Heart left ventricle (tissue), 16 donors: ENCODE measurements at regions of chr2 and their contacts with region 1.

Region 1: GRCh38 chr2:101341901-101342624 is 33.6 kb upstream of the RNF149 start:
- DNase-seq: peak; percentile 68 to 84 (median 79)
- ATAC-seq: peak; percentile 66 to 79 (median 72)
- H3K4me3 ChIP-seq: no peak overlapping the region
- H3K27ac ChIP-seq: no peak overlapping the region
- H3K4me1 ChIP-seq: peaks cover 0 to 25% (median 0%) of the 10 kb centered on the region in 12 donors
- H3K27me3 ChIP-seq: no peaks in the 10 kb centered on the region
- CTCF ChIP-seq: peak; percentile 74 to 88 (median 82)
- POLR2A ChIP-seq: no peak

Region 2: DNA sequence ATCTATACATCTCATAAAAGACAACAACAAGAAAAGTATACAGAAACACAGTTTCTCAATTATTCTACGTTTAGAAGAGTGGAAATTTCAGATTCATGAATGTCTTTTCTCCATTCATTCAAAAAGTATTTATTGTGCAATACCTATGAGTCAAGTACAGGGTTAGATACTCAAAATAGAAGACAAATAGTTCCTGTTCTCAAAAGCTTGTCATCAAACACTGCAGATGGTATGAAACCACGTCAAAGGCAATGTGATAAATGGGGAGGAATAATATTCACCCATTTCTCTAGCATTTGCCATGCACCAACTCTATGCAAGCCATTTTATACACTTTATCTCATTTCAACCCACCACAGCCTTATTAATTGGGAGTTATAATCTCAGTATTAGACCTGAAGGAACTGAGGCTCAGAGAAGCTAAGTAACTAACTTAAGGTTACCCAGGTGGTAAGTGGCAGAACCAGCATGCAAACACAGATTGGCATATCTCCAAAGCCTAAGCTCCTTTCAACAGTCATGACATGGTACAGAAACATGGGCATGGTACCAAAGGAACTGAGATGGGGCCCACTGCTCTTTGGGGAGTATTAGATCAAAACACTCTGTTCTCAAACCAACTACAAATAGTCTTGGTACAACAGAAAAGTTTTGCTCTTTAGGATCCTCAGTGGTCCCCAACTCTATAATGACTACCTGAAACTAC is 589.3 kb before region 1 on chr2:
- intact Hi-C with region 1: no loop called
- DNase-seq: no peak
- ATAC-seq: peak; percentile 60 to 85 (median 82)
- H3K4me3 ChIP-seq: no peak overlapping the region
- H3K27ac ChIP-seq: peak overlapping the region in 4 of 12 donors; percentile 8 to 53 (median 26)
- H3K4me1 ChIP-seq: peaks cover 0 to 40% (median 14%) of the 10 kb centered on the region in 12 donors
- H3K27me3 ChIP-seq: no peaks in the 10 kb centered on the region
- CTCF ChIP-seq: no peak
- POLR2A ChIP-seq: no peak

Region 3: DNA sequence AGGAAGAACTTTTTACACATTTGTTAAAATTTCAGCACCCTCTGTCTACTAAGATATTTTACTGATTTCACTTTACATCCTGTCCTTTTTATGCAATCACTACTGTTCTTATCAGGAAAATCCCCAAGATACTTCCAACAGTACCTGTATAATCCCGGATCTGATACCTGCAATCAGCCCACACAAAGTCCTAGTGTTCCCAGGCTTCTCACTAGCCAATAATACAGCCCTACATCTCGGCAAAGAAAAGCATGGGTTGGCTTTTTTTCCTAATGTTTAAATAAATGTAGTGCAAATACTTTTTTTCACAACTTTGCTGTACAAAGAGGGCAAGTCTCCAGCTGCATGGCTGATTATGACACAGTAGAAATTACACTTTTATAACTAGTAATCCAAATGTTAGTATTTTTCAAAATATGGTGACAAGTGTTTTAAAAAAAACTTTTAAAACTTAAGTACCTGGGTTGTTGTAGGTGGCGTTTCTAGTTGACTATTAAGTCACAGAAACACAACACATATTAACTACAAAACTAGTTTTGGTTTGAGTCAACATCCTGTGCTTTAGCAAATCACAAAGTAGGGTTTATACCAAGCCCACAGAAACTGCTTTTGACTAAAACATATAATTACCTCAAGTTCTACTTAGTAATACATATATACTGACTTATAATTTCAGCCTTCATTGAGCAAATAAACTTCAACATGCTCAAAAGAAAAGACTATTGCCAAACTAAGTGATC is 69.8 kb before region 1 on chr2:
- intact Hi-C with region 1: no loop called
- DNase-seq: no peak
- ATAC-seq: no peak
- H3K4me3 ChIP-seq: no peak overlapping the region
- H3K27ac ChIP-seq: no peak overlapping the region
- H3K4me1 ChIP-seq: peaks cover 0 to 9% (median 0%) of the 10 kb centered on the region in 12 donors
- H3K27me3 ChIP-seq: no peaks in the 10 kb centered on the region
- CTCF ChIP-seq: no peak
- POLR2A ChIP-seq: no peak

Region 4: GRCh38 chr2:101387151-101387807 is 45.2 kb after region 1 on chr2 and contains the start of gene CREG2:
- intact Hi-C with region 1: loop called in 7 of 10 experiments (anchors 2 to 5 kb)
- DNase-seq: peak; percentile 61 to 83 (median 68)
- ATAC-seq: peak; percentile 55 to 96 (median 90)
- H3K4me3 ChIP-seq: peak within 1 kb of the TSS; percentile 28 to 63 (median 52)
- H3K27ac ChIP-seq: no peak within 1 kb of the TSS
- H3K4me1 ChIP-seq: peaks cover 0 to 17% (median 9%) of the 10 kb centered on the region in 12 donors
- H3K27me3 ChIP-seq: peaks cover 0 to 56% (median 5%) of the 10 kb centered on the region in 9 donors
- CTCF ChIP-seq: peak; percentile 32 to 75 (median 46)
- POLR2A ChIP-seq: no peak
- total RNA-seq, gene CREG2: 0.18 to 1.1 (median 0.46) TPM in 4 of 9 donors, not detected in the others

Region 5: GRCh38 chr2:101419096-101419663 is 77.1 kb after region 1 on chr2:
- intact Hi-C with region 1: loop called in 1 of 10 experiments (anchors 2 kb)
- DNase-seq: peak in 4 of 5 donors; percentile 47 to 68 (median 62)
- ATAC-seq: peak; percentile 55 to 89 (median 76)
- H3K4me3 ChIP-seq: no peak overlapping the region
- H3K27ac ChIP-seq: no peak overlapping the region
- H3K4me1 ChIP-seq: peaks cover 0 to 4% (median 0%) of the 10 kb centered on the region in 12 donors
- H3K27me3 ChIP-seq: no peaks in the 10 kb centered on the region
- CTCF ChIP-seq: peak; percentile 66 to 90 (median 83)
- POLR2A ChIP-seq: no peak

Region 6: DNA sequence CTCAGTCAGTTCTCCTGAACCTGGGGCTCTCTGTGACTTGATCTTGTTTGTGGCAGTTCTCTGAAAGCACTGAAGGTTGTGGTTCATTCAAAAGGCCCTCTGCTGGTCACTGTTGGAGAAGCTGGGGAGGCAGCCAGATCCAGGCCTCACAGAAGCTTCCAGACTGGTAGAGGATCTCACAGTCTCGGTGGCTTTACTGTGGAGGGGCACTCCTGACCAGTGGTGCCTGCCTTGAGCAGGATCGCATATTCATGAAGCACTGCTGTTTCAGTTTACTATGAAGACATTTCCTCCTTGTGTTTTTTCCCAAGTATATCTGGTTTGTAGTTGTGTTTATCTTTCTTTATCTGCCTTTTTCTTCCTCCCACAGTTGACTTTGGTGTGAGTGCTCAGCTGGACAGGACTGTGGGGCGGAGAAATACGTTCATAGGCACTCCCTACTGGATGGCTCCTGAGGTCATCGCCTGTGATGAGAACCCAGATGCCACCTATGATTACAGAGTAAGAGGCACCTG is 489.3 kb after region 1 on chr2:
- intact Hi-C with region 1: loop called in 5 of 10 experiments (anchors 2 to 10 kb)
- DNase-seq: peak in 4 of 5 donors; percentile 72 to 79 (median 76)
- ATAC-seq: peak; percentile 70 to 84 (median 80)
- H3K4me3 ChIP-seq: no peak overlapping the region
- H3K27ac ChIP-seq: peak overlapping the region in 10 of 12 donors; percentile 40 to 76 (median 56)
- H3K4me1 ChIP-seq: peaks cover 9 to 58% (median 53%) of the 10 kb centered on the region in 12 donors
- H3K27me3 ChIP-seq: no peaks in the 10 kb centered on the region
- CTCF ChIP-seq: peak; percentile 64 to 87 (median 78)
- POLR2A ChIP-seq: no peak

Region 7: DNA sequence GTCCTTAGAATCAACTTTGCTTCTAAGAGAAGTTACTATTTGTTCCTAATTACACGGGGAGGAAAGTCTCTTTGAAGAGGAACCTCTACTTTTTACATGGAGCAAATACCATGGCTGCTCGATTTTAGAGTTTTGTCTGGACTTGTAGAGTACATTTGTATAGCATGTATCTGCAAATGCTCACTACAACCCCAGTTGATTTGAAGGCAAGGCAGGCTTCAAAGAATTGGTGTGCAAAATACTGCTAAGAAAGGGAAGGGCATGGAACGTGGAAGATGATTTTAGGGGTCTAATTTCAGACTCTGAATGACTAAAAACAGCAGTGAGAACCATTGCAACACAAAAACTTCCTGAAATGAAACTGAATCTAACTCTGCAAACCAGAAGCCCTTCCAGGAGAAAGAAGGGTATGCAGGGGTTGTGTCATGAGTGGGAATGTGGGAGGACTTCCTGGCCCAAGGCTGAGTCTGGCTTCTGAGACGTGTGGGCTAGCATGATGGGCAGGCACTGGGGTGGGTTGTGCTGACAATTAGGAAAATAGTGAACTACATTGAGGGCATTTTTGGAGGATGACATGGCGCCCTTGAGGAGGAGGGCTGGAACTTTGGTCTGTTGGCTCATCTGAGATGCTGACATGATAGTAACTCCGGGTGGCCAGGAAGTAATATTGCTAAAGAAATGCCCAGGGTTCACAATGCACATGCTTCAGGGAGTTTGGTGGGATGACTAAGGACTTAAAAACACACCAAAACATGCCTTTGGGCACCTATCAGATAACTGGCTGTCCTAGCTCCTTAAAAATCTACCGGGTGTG is 630.8 kb after region 1 on chr2:
- intact Hi-C with region 1: loop called in 1 of 10 experiments (anchors 5 kb)
- DNase-seq: no peak
- ATAC-seq: peak in 3 of 4 donors; percentile 42 to 76 (median 69)
- H3K4me3 ChIP-seq: no peak overlapping the region
- H3K27ac ChIP-seq: peak overlapping the region in 1 of 12 donors; percentile 66
- H3K4me1 ChIP-seq: peaks cover 0 to 38% (median 0%) of the 10 kb centered on the region in 12 donors
- H3K27me3 ChIP-seq: no peaks in the 10 kb centered on the region
- CTCF ChIP-seq: no peak
- POLR2A ChIP-seq: no peak